Sigmoid colon (tissue), 7 donors: ENCODE measurements at regions of chr2 and their contacts with region 1.

Region 1: DNA sequence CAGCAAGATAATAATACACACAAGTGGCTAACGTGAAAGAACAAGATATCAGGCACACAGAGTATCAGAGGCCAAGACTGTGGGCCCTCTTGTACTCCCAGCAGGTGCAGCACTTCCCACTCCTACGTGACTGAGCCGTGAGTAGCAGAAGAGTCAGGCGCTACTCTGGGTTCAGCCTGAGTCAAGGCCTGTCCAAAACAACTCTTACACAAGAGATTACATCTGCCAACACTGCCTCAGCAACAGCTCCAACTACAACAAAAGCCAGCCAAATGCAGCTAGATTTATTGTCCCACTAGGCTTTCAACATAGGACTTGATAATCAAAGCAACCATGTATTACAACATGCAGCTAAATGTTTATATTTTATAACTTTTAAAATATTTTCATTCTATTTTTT is 56.2 kb downstream of the ITSN2 start:
- DNase-seq: peak; percentile 93
- H3K4me3 ChIP-seq: no peak overlapping the region
- H3K27ac ChIP-seq: peak overlapping the region; percentile 72 to 82 (median 78)
- H3K4me1 ChIP-seq: peaks cover 0 to 29% (median 27%) of the 10 kb centered on the region in 4 donors
- H3K27me3 ChIP-seq: no peaks in the 10 kb centered on the region
- CTCF ChIP-seq: no peak
- EP300 ChIP-seq: peak in 1 of 4 donors; percentile 32
- POLR2A ChIP-seq: no peak

Region 2: GRCh38 chr2:24287171-24287570 is 16.9 kb before region 1 on chr2:
- intact Hi-C with region 1: no loop called
- DNase-seq: no peak
- H3K4me3 ChIP-seq: no peak overlapping the region
- H3K27ac ChIP-seq: no peak overlapping the region
- H3K4me1 ChIP-seq: no peaks in the 10 kb centered on the region
- H3K27me3 ChIP-seq: no peaks in the 10 kb centered on the region
- CTCF ChIP-seq: no peak
- EP300 ChIP-seq: no peak
- POLR2A ChIP-seq: no peak

Region 3: DNA sequence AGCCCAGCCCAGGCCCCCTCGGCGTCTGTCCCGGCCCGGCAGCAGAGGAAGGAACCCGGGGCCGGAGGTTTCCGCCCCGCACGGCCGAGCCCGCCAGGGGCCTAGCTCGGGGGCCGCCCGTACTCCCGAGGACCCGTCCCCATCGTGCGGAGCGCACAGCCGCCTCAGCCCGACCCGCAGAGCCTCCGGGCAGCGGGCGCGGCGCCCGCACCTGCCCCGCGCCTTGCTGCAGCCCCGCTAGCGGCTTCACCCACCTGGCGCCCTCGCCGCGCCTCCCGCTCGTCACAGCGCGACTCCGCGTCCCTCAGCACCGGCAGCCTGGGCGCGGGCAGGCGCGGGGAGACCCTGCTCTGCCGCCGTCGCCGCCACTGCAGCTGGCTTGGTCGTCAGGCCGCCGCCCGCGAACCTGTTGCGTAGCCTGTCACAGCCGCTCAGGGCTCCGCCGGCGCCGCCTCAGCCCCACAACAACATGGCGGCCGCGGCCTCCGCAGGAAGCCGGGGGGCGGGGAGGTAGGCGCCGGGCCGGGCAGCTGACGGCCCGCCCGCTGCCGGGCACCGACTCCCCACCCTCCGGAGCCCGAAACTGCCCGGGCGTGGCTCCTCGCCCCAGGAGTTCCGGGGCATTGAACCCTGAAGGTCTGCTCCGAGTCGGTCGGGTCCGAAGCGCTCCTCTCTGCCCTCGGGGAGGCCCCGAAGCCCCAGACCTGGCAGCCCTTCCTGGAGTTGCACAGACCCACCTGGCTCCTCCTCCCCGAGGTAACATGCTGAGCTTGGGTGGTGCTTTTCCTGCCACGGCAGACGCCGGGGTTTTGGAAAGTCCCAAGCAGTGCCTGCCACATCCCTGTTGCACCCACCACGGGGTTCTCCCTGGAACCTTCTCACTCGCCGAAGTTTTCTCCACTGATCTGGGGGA is 56.2 kb after region 1 on chr2 and contains the start of gene ITSN2:
- intact Hi-C with region 1: loop called (anchors 2 kb)
- DNase-seq: peak; percentile 88
- H3K4me3 ChIP-seq: peak within 1 kb of the TSS; percentile 77 to 100 (median 94)
- H3K27ac ChIP-seq: peak within 1 kb of the TSS; percentile 88 to 98 (median 94)
- H3K4me1 ChIP-seq: peaks cover 0 to 30% (median 17%) of the 10 kb centered on the region in 4 donors
- H3K27me3 ChIP-seq: no peaks in the 10 kb centered on the region
- CTCF ChIP-seq: no peak
- EP300 ChIP-seq: no peak
- POLR2A ChIP-seq: no peak
- total RNA-seq, gene ITSN2: 56.0 to 73.6 (median 58.1) TPM